Breast epithelium (tissue), 4 donors: ENCODE measurements at regions of chr11 and their contacts with region 1.

Region 1: DNA sequence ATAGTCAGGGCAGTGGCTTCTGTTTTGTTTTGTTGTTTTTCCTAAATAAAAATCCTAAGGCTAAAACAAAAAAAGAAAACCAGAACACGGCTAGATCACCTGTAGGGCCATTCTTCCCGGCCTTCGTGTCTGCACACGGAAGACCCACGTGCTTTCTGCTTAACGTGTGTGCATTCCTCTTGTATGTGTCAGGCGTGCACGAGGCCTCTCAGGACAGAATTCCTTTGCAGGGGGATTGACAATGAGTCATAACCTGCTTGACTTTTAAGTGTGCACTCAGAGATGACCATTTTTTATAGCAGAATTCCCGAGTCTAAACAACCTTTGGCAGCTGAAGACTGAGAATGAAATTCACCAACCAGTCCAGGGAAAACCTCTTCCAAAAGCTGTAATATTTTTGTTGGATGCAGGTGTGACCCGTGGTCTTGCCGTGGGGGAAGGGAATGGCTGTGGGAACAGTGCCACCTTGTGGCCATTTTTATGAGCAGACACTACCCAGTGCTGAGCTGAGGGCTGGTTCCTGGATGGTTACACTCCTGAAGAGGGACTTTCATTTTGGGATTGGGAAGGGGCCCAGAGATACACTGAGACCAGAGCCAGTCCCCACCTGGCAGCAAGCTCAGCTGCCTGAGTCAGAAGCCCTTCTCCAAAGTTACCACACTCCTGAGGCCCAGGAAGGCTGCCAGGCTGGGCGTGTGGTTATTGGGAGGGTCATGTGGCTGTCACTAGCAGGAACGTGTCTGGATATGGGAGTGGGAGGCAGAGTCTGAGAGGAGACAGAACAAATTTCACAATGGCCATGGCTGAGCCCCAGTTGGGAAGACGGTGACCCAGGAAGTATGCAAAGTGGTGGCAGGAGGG is 35.8 kb upstream of the DKK3 start:
- DNase-seq: peak; percentile 79 to 92
- H3K4me3 ChIP-seq: peak overlapping the region in 2 of 3 donors; percentile 6 to 13
- H3K27ac ChIP-seq: peak overlapping the region; percentile 82 to 88
- H3K4me1 ChIP-seq: peaks cover 0 to 9% of the 10 kb centered on the region in 2 donors
- H3K27me3 ChIP-seq: no peaks in the 10 kb centered on the region
- CTCF ChIP-seq: peak; percentile 96 to 97 (median 96)
- POLR2A ChIP-seq: no peak

Region 2: DNA sequence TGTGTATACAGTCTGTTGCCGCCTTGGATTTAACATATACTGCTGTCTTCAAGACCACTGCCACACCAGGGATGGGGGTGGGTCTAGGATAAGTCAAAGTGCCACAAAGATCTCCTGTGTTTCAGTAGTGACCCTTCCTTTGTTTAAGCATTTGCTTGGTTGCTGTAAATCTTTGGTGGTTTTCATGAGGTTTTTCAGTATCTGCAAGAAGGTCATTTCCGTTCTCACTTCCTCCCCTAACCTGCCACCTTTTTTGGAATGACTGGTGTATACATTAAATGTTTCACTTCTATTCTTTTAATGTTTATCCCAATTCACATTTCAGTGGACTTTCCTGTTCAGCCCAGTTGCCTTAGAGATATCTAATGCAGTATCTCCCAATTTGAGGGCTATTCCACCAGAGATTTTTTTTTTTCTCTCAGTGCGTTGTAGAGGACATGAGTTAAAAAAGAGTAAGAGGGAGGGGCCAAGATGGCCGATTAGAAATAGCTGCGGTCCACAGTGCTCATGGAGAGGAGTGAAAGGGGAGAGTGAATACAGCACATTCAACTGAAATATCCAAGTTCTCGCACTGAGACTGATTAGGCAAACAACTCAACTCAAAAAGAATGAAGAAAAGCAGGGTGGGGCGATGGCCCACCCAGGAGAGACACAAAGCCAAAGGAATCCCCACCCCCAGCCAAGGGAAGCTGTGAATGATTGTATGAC is 159.3 kb before region 1 on chr11:
- intact Hi-C with region 1: no loop called
- DNase-seq: no peak
- H3K4me3 ChIP-seq: no peak overlapping the region
- H3K27ac ChIP-seq: no peak overlapping the region
- H3K4me1 ChIP-seq: no peaks in the 10 kb centered on the region
- H3K27me3 ChIP-seq: no peaks in the 10 kb centered on the region
- CTCF ChIP-seq: no peak
- POLR2A ChIP-seq: no peak

Region 3: GRCh38 chr11:11931461-11932055 is 112.6 kb before region 1 on chr11:
- intact Hi-C with region 1: loop called (anchors 10 kb)
- DNase-seq: no peak
- H3K4me3 ChIP-seq: no peak overlapping the region
- H3K27ac ChIP-seq: no peak overlapping the region
- H3K4me1 ChIP-seq: no peaks in the 10 kb centered on the region
- H3K27me3 ChIP-seq: no peaks in the 10 kb centered on the region
- CTCF ChIP-seq: peak; percentile 50 to 70 (median 56)
- POLR2A ChIP-seq: no peak

Region 4: GRCh38 chr11:11987503-11988022 is 56.6 kb before region 1 on chr11:
- intact Hi-C with region 1: no loop called
- DNase-seq: no peak
- H3K4me3 ChIP-seq: no peak overlapping the region
- H3K27ac ChIP-seq: no peak overlapping the region
- H3K4me1 ChIP-seq: no peaks in the 10 kb centered on the region
- H3K27me3 ChIP-seq: no peaks in the 10 kb centered on the region
- CTCF ChIP-seq: peak in 1 of 3 donors; percentile 8
- POLR2A ChIP-seq: no peak

Region 5: DNA sequence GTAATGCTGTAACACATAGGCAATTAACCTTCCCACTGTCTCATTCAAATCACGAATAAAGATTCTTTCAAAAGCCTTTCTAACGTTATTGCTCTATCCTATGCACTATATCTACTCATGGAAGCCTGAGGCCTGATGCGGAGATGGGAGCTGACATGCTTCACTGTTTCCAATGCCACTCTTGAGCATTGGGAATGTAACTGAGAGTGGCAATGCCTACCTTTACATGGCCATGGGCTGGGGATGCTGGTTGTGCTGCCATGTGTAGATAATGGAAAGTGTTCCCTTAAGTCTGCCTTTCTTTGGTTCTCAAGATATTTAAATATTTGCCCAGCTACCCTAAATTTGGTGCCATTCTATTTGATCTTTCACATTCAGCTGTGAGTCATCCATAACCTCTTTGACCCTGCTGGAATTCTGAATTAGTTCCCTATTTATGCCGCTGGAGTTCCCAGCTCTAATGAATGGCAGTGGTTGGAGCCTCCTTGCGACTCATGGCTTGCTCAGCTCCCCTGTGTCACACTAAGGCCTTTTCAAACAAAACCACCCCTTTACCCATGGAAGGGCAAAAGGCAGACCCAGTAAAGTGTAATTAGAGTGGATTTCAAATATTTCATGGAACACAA is 14.3 kb before region 1 on chr11:
- intact Hi-C with region 1: no loop called
- DNase-seq: no peak
- H3K4me3 ChIP-seq: no peak overlapping the region
- H3K27ac ChIP-seq: no peak overlapping the region
- H3K4me1 ChIP-seq: no peaks in the 10 kb centered on the region
- H3K27me3 ChIP-seq: no peaks in the 10 kb centered on the region
- CTCF ChIP-seq: no peak
- POLR2A ChIP-seq: no peak

Region 6: DNA sequence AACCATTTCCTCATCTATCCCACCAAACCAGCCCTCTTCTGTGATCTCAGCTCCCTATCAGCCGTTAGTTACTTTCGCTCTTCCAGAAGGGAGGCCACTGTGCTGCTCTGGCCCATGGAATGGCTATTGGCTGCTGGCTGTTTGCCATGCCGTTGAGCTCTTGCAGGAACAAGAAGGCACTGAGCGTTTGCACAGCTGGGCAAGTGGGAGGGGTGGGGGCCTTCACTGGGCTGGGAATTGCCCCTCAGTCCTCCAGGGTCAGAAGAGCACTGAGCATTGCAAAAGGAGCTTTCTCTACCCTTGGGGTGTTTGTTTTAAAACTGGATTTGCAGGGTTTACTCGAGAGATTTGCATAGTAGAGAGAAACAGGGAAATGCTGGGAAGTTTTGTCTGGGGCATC is 204.1 kb after region 1 on chr11:
- intact Hi-C with region 1: loop called (anchors 10 kb)
- DNase-seq: peak; percentile 76 to 93
- H3K4me3 ChIP-seq: no peak overlapping the region
- H3K27ac ChIP-seq: peak overlapping the region; percentile 71
- H3K4me1 ChIP-seq: peaks cover 0 to 12% of the 10 kb centered on the region in 2 donors
- H3K27me3 ChIP-seq: no peaks in the 10 kb centered on the region
- CTCF ChIP-seq: no peak
- POLR2A ChIP-seq: no peak

Region 7: GRCh38 chr11:12281571-12282478 is 237.6 kb after region 1 on chr11:
- intact Hi-C with region 1: loop called (anchors 5 kb)
- DNase-seq: peak; percentile 88 to 91
- H3K4me3 ChIP-seq: no peak overlapping the region
- H3K27ac ChIP-seq: no peak overlapping the region
- H3K4me1 ChIP-seq: no peaks in the 10 kb centered on the region
- H3K27me3 ChIP-seq: no peaks in the 10 kb centered on the region
- CTCF ChIP-seq: peak; percentile 99
- POLR2A ChIP-seq: no peak